ENCODE measurements at regions of chr20 and their contacts with region 1.

Region 1: DNA sequence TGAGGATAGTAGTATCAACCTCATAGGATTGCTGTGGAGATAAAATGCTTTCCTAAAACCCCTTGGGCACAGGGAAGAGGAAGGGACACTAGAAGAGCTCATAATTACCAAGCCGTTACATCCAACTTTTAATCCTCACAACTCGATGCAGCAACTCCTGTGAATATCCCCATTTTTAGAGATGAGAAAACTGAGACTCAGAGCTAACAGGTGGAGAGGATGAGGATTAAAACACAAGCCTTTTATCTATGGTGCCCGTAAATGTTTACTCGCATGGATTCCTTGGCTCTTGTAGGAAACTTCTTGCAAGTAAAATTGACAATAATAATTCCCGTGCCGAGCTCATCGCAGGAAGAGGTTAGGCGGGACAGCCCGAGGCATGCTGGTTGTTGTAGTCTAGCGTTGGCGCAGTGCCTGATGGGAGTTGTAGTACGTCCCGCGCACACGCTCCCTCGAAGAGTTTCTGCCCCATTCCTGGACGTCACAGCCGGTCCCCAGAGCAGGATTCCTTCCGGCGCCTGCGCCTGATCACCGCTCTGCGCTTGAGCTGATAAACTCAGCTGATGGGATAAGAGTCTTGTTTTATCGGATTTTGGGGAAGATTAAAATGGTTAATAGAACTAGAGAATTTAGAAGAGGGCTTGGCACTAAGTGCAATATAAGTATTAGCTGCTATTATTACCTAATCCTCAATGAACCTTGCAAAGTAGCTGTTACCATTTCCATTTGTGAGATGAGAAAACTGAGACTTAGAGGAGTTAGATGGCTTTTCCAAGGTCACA is 2.8 kb upstream of the UBE2V1 start:
- DNase-seq: peak; percentile 97
- H3K4me3 Mint-ChIP-seq: peak overlapping the region; percentile 74
- H3K27ac Mint-ChIP-seq: peak overlapping the region; percentile 89
- H3K4me1 Mint-ChIP-seq: peaks cover 39% of the 10 kb centered on the region
- H3K27me3 Mint-ChIP-seq: no peaks in the 10 kb centered on the region
- CTCF ChIP-seq: no peak

Region 2: GRCh38 chr20:49936153-49937027 is 179.4 kb before region 1 on chr20 and contains the start of gene RNF114:
- CTCF ChIA-PET with region 1: interaction called, 3 read pairs
- POLR2A ChIA-PET with region 1: interaction called, 12 read pairs
- intact Hi-C with region 1: no loop called
- DNase-seq: peak; percentile 90
- H3K4me3 Mint-ChIP-seq: peak within 1 kb of the TSS; percentile 85
- H3K27ac Mint-ChIP-seq: peak within 1 kb of the TSS; percentile 69
- H3K4me1 Mint-ChIP-seq: peaks cover 23% of the 10 kb centered on the region
- H3K27me3 Mint-ChIP-seq: no peaks in the 10 kb centered on the region
- CTCF ChIP-seq: no peak
- total RNA-seq, gene RNF114: 40.0 and 48.6 TPM in 2 replicates

Region 3: GRCh38 chr20:50095476-50096078 is 20.2 kb before region 1 on chr20:
- CTCF ChIA-PET with region 1: interaction called, 11 read pairs
- POLR2A ChIA-PET with region 1: interaction called, 177 read pairs
- intact Hi-C with region 1: no loop called
- DNase-seq: no peak
- H3K4me3 Mint-ChIP-seq: no peak overlapping the region
- H3K27ac Mint-ChIP-seq: no peak overlapping the region
- H3K4me1 Mint-ChIP-seq: peaks cover 23% of the 10 kb centered on the region
- H3K27me3 Mint-ChIP-seq: no peaks in the 10 kb centered on the region
- CTCF ChIP-seq: no peak

Region 4: DNA sequence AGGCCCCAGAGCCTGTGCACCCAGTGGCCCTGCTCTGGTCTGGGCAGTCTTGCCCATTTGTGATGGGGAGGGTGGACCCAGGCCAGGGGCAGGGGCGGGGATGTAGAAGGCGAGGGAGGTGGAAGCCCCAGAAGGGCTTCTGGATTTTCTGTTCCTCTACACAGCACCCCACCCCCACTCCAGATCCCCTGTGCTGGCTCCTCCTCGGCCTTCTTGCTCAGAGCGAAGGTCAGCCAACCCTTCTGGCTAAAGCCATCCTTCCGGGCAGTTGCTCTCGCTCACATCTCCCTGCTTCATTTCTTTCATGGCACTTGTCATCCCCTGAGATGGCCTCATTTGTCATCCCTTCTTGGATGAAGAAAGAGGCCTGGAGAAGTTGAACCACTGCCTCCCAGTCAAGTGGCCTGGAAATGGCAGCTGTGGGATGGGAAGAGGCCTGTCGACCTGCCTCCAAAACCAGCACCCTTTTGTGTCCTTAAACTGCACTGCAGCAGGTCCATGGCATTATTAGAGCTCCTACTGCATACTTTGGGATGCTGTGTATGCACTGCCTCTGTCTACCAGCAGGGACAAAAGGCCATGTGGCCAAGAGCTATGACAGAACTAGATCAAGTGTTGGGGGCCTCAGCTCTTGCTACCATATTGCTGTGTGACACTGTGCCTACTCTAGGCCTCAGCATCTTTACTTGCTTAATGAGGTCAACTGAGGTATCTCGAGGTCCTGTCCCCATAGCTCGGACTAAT is 17.9 kb after region 1 on chr20:
- CTCF ChIA-PET with region 1: interaction called, 129 read pairs
- POLR2A ChIA-PET with region 1: interaction called, 386 read pairs
- intact Hi-C with region 1: no loop called
- DNase-seq: no peak
- H3K4me3 Mint-ChIP-seq: no peak overlapping the region
- H3K27ac Mint-ChIP-seq: no peak overlapping the region
- H3K4me1 Mint-ChIP-seq: peaks cover 20% of the 10 kb centered on the region
- H3K27me3 Mint-ChIP-seq: no peaks in the 10 kb centered on the region
- CTCF ChIP-seq: no peak

Region 5: DNA sequence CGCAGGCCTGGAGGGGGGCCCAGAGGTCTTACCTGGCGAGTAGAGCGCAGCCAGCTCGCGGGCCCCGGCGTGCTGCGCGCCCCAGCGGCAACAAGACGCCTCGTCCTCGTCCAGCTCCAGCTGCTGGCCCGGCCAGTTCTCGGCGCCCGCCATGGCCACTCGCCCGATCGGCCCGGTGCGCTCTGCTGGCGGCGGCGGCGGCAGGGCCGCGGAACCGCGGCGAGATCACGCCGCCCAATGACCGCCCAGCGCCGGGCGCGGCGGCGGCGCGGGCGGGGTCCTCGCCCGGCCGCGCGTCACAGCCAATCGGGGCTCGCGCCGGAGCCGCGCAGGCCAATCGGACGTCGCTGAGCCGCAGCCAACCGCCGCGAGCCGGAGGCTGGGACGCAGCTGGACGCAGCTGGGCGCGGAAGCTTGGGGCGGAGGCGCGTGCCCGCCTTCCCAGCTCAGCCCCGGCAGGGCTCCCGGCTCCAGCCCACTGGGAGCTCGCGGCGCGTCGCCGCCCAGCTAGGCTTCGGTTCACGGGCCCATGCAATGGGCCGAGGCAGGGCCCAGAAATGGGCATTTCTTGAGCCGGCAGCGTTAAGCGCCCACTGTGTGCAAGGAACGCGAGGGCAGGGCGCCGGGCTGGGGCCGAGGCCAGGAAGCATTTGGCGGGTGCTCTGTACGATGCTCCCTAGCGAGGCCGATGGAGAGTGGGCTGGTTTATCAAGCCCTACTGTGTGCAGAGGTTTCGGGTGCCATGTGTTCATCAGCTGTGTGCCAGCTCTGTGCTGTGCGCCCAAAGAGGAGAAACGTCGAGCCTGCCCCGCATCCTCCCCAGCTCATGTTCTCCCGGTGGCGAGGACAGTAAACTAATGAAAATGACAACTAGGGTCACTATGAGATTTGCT is 37.9 kb after region 1 on chr20 and contains the start of gene PEDS1:
- CTCF ChIA-PET with region 1: interaction called, 408 read pairs
- POLR2A ChIA-PET with region 1: interaction called, 386 read pairs
- intact Hi-C with region 1: no loop called
- DNase-seq: peak; percentile 85
- H3K4me3 Mint-ChIP-seq: peak within 1 kb of the TSS; percentile 87
- H3K27ac Mint-ChIP-seq: peak within 1 kb of the TSS; percentile 94
- H3K4me1 Mint-ChIP-seq: peaks cover 44% of the 10 kb centered on the region
- H3K27me3 Mint-ChIP-seq: no peaks in the 10 kb centered on the region
- CTCF ChIP-seq: no peak
- total RNA-seq, gene PEDS1: 26.0 and 30.5 TPM in 2 replicates

Region 6: DNA sequence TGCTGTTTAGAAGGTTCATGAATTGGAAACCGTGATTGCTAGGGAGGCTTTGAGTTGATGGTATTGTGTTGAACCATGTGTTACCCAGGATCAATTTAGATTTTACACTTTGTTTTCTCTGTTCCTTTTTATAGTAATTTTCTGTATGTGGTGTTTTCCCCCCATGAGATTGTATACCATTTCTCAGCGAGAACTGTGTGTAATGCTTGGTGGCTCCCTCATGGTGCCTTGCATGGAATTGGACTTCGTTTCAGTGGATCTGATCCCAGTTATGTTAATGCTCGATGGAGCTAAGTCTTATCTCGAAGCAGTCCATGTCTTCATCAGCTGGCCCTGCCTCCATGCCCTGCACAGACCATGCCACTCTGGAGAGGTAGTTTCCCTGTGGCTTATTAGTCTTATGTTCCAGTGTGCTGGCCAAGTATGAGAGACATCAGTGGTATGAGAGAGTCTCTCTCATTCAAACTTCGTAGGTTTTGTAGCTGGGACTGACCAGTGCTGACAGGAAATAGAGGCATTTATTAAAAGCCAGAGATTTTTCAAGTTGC is 413.1 kb after region 1 on chr20:
- CTCF ChIA-PET with region 1: no interaction called
- POLR2A ChIA-PET with region 1: no interaction called
- intact Hi-C with region 1: no loop called
- DNase-seq: no peak
- H3K4me3 Mint-ChIP-seq: no peak overlapping the region
- H3K27ac Mint-ChIP-seq: no peak overlapping the region
- H3K4me1 Mint-ChIP-seq: peaks cover 8% of the 10 kb centered on the region
- H3K27me3 Mint-ChIP-seq: no peaks in the 10 kb centered on the region
- CTCF ChIP-seq: no peak

Measured in MCF 10A (cell line).